Mucosa of descending colon (tissue), 3 donors: ENCODE measurements at regions of chr9 and their contacts with region 1.

Region 1: GRCh38 chr9:121213136-121213806 is 11.6 kb upstream of the RAB14 start:
- DNase-seq: peak; percentile 88 to 94 (median 93)
- ATAC-seq: peak; percentile 100
- H3K4me3 ChIP-seq: no peak overlapping the region
- H3K4me1 ChIP-seq: peaks cover 6% of the 10 kb centered on the region
- CTCF ChIP-seq: peak; percentile 87

Region 2: DNA sequence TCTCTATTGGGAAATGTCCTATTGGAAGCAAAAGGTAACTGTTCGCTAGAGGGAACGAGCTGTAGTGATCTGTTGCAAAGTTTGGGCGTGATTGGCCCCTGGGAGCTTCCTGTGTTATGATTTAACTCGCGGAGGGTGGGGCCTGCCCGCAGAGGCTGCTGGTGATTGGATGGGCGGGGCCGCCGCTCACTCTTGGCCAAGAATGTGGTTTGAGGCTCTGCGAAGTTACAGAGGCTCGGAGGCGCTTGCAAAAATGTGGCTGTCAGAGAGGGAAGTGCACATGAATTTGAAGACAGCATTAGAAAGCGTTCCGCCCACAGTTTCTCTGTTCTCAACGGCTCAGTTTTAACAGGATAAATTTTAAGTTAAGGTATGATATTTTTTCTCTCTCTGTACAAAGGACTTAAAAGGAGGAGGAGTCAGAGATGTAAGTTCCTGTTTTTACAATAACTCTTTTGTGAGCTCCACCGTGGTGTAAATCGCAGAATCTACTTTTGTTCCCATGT is 91.6 kb before region 1 on chr9:
- intact Hi-C with region 1: no loop called
- DNase-seq: peak; percentile 96 to 99 (median 98)
- ATAC-seq: peak; percentile 100
- H3K4me3 ChIP-seq: peak overlapping the region; percentile 15
- H3K4me1 ChIP-seq: no peaks in the 10 kb centered on the region
- CTCF ChIP-seq: peak; percentile 30

Region 3: GRCh38 chr9:121312166-121312565 is 98.9 kb after region 1 on chr9:
- intact Hi-C with region 1: loop called in 1 of 2 experiments (anchors 5 kb)
- DNase-seq: peak in 1 of 3 donors; percentile 43
- ATAC-seq: peak; percentile 39
- H3K4me3 ChIP-seq: no peak overlapping the region
- H3K4me1 ChIP-seq: no peaks in the 10 kb centered on the region
- CTCF ChIP-seq: no peak

Region 4: GRCh38 chr9:121326130-121326838 is 113.0 kb after region 1 on chr9:
- intact Hi-C with region 1: loop called in 1 of 2 experiments (anchors 10 kb)
- DNase-seq: peak in 2 of 3 donors; percentile 45 to 78
- ATAC-seq: peak; percentile 11
- H3K4me3 ChIP-seq: no peak overlapping the region
- H3K4me1 ChIP-seq: peaks cover 10% of the 10 kb centered on the region
- CTCF ChIP-seq: no peak

Region 5: DNA sequence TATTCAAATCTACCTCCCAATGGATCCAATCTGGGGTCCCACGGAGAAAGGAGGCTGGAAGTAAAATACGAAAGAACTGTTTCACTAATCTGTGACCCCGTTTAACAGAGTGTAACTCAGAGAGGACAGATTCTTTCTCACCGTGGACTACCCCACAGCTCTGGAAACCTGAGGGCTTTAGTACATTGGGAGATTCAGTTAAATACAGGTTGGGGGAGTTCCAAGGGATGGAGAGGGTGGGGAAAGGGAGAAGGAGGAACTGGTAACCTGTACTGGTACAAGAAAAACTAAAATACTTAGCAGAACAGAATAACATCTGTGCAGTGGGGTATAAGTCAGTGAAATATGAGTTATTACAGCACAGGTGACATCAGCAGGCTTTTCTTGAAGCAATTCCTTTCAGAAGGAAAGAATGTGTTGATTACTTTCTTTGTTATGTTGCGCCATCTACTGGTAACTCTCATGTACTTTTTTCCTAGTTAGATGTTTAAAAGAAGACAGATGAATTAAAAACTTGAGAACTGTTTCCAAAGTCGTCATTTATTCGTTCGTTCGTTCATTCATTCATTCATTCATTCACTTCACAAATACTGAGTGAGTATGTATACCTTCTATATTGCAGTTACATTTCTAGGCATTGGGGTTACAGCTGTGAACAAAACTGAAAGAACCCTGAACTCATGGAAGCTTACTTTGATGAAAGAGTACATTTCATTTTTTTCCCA is 186.8 kb after region 1 on chr9:
- intact Hi-C with region 1: loop called (anchors 5 kb)
- DNase-seq: peak in 1 of 3 donors; percentile 24
- ATAC-seq: peak; percentile 82
- H3K4me3 ChIP-seq: no peak overlapping the region
- H3K4me1 ChIP-seq: no peaks in the 10 kb centered on the region
- CTCF ChIP-seq: peak; percentile 30

Region 6: DNA sequence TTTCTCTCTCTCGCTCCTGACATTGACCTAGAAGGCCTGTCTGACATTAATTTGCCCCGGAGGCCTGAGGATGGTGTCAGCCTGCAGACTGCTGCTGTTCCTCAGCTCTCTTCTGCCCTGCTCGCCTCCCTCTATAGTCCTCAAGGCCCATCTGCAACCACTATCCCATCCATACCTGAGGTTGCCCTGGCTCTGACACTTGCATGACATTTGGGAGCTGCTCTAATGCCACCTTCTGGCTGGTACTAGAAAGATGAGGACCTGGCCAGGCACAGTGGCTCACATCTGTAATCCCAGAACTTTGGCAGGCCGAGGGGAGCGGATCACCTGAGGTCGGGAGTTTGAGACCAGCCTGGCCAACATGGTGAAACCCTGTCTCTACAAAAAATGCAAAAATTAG is 325.0 kb after region 1 on chr9:
- intact Hi-C with region 1: no loop called
- DNase-seq: no peak
- ATAC-seq: peak; percentile 25
- H3K4me3 ChIP-seq: no peak overlapping the region
- H3K4me1 ChIP-seq: no peaks in the 10 kb centered on the region
- CTCF ChIP-seq: no peak

Region 7: DNA sequence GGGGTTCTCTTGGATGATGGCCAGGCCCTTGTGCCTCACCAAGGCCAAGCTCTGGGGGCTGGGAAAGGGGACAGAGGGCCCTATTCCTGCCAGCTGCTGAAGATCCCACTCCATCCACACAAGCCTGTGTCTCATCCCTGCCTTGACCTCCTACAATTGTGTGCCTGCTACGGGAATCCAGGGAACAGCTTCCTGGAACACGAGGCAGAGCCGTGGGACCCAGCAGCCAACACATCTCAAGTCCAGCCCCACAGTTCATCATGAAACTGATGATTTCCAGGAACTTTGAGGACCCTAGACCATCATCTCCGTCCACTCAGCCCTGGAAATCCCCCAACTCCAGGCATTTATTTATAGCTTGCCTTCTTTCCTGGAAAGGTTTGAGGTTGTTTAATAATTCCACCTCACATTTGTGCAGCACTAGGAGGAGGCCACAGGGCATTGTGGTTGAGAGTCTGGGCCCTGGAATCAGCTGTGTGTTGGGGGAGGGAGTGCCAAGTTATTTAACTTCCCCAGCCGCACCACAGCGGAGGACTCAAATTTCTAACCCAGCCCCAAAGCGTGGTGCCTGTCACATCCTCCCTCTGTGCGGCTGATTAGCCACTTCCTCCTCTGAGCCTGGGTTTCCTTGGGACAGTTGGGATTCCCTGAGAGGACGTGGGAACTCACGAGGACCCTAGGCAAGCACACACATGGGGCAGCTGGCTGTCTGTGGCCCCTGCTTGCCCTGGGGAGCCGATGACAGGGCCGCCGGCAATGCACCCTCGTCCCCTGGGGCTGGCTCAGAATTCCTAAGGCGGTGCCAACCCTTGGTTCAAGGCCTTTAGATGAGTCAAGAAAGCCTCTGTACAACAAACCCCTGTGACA is 344.5 kb after region 1 on chr9:
- intact Hi-C with region 1: no loop called
- DNase-seq: peak in 2 of 3 donors; percentile 40 to 42
- ATAC-seq: peak; percentile 51
- H3K4me3 ChIP-seq: no peak overlapping the region
- H3K4me1 ChIP-seq: peaks cover 2% of the 10 kb centered on the region
- CTCF ChIP-seq: no peak